Cardiac septum (tissue), 1 donor: ENCODE measurements at regions of chr14 and their contacts with region 1.

Region 1: GRCh38 chr14:21092273-21093011 is 6.0 kb downstream of the ZNF219 start:
- DNase-seq: peak; percentile 96

Region 2: DNA sequence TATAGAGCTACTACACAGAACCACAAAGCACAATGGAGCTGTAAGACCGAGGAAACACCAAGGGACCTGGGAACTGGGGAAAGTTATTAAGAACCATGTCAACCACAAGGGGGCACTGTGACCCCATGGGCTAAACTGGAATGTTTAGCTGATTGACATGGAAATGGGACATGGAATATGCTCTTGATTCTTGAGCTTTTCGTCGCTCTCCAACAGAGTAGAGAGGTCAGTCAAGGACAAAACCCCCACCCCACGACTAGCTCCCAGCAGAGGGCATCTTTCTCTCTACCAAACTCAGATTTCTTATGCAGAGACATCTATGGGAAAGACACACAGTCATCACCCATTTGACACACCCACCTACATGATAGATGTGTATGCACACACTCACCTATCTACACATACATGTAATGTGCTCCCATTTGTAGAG is 77.7 kb before region 1 on chr14:
- intact Hi-C with region 1: loop called (anchors 5 kb)
- DNase-seq: peak; percentile 83

Region 3: GRCh38 chr14:21103710-21104447 is 11.4 kb after region 1 on chr14:
- intact Hi-C with region 1: loop called (anchors 2 kb)
- DNase-seq: peak; percentile 97